ENCODE measurements at regions of chr9 and their contacts with region 1.

Region 1: DNA sequence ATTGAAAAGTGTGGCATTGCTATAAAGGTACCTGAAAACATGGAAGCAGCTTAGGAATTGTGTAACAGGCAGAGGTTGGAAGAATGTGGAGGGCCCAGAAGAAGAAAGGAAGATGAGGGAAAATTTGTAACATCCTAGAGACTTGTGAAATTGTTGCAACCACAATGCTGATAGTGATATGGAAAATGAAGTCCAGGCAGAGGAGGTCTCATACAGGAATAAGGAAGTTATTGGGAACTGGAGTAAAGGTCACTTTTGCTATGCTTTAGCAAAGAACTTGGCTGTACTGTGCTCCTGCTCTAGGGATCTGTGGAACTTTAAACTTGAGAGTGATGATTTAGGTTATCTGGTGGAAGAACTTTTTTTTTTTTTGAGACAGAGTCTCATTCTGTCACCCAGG is 43.5 kb downstream of the PTPDC1 start:
- DNase-seq: no peak
- ATAC-seq: no peak
- H3K4me3 ChIP-seq: no peak overlapping the region
- H3K27ac ChIP-seq: no peak overlapping the region
- H3K4me1 ChIP-seq: no peaks in the 10 kb centered on the region
- H3K27me3 ChIP-seq: no peaks in the 10 kb centered on the region
- CTCF ChIP-seq: no peak
- POLR2A ChIP-seq: no peak

Region 2: DNA sequence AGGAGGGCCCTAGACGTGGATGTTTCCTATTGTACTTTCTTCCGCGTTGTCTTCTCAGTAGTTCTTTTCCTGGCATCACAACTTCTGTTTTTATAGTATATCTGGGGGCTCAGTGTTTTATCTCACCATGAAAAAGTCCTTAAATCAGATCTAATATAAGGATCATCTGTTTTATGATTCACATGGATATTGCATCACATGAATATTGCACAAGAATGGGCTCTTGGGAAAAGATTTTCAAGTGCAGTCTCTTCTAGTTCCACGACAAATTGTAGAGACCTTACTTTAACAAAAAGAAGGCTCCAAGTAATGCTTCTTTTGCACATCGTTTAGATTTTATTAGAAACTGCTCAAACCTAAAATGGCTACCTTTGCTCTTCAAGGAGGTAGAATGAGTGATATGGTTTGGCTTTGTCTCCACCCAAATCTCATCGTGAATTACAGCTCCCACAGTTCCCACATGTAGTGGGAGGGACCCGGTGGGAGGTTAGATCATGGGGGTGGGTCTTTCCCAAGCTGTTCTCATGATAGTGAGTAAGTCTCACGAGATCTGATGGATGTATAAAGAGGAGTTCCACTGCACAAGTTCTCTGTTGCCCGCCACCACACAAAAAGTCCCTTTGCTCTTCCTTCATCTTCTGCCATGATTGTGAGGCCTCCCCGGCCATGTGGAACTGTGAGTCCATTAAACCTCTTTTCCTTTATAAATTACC is 730.0 kb before region 1 on chr9:
- intact Hi-C with region 1: loop called in 1 of 10 experiments (anchors 10 kb)
- DNase-seq: no peak
- ATAC-seq: peak in 1 of 4 donors; percentile 38
- H3K4me3 ChIP-seq: no peak overlapping the region
- H3K27ac ChIP-seq: no peak overlapping the region
- H3K4me1 ChIP-seq: no peaks in the 10 kb centered on the region
- H3K27me3 ChIP-seq: no peaks in the 10 kb centered on the region
- CTCF ChIP-seq: no peak
- POLR2A ChIP-seq: no peak

Region 3: DNA sequence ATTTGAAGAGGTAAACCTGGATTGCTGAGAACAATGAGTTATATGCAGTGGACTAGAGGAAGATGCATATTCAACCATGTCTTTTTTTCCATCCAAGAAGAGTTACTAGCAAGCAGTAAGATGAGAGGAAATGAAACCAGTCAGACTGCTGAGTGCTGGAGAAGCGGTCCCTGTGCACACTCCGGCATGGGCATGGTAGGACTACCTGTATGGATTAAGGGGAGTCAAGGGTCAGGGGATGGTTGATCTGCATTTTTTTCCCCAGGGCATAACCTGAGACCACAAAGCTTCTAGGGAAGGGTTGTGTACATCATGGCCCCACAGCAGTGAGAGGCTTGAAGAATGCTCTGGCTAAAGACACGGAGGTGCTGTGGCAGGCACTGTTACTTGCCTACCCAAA is 54.7 kb after region 1 on chr9:
- intact Hi-C with region 1: no loop called
- DNase-seq: no peak
- ATAC-seq: peak in 3 of 4 donors; percentile 15 to 49 (median 21)
- H3K4me3 ChIP-seq: no peak overlapping the region
- H3K27ac ChIP-seq: peak overlapping the region in 1 of 12 donors; percentile 51
- H3K4me1 ChIP-seq: peaks cover 0 to 49% (median 29%) of the 10 kb centered on the region in 12 donors
- H3K27me3 ChIP-seq: no peaks in the 10 kb centered on the region
- CTCF ChIP-seq: no peak
- POLR2A ChIP-seq: no peak

Measured in heart left ventricle (tissue), 16 donors.